ENCODE measurements at regions of chr2 and their contacts with region 1.

Region 1: GRCh38 chr2:96554293-96555145 is 18.0 kb downstream of the ARID5A start:
- DNase-seq: peak; percentile 76
- ATAC-seq: peak; percentile 79
- H3K4me3 Mint-ChIP-seq: no peak overlapping the region
- H3K27ac Mint-ChIP-seq: no peak overlapping the region
- H3K4me1 Mint-ChIP-seq: peaks cover 38% of the 10 kb centered on the region
- H3K27me3 Mint-ChIP-seq: no peaks in the 10 kb centered on the region

Region 2: GRCh38 chr2:96509114-96509846 is 45.2 kb before region 1 on chr2:
- CTCF ChIA-PET with region 1: interaction called, 85 read pairs
- DNase-seq: peak; percentile 69
- ATAC-seq: peak; percentile 35
- H3K4me3 Mint-ChIP-seq: no peak overlapping the region
- H3K27ac Mint-ChIP-seq: no peak overlapping the region
- H3K4me1 Mint-ChIP-seq: peaks cover 27% of the 10 kb centered on the region
- H3K27me3 Mint-ChIP-seq: no peaks in the 10 kb centered on the region

Region 3: DNA sequence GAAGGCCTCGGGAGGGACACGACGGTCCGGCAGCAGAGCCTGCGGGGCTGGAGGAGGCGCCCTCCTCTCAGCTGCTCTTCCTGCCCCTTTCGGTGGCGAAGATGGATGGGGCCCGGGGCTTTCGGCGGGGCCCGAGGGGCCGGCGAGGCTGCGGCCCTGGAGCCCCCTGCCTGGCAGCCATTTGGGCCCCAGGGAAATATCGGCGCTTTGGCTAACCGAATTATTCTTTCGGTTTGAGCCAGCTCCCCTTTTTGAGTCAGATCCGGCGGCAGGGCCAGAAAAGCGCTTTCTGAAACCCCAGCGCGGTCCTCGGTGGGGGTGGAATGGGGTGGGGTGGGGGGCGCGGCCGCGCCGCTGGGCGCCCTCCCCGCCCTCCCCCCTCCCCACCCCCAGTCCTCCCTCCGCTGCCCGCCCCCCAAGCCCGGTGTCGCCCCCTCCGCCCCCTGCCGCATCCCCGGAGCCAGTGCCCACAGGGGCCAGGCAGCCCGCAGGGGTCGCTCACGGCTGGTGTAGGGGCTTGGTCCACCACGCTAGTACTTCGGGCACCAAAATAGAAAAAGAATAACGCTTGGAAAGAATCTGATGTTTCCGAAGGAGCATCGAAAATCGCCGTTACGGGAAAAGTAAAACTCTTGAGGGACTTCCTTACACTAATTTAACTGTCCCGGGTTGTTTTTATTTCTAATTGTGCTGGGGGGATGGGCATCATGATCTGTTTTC is 27.1 kb before region 1 on chr2:
- CTCF ChIA-PET with region 1: interaction called, 24 read pairs
- DNase-seq: peak; percentile 88
- ATAC-seq: peak; percentile 43
- H3K4me3 Mint-ChIP-seq: peak overlapping the region; percentile 65
- H3K27ac Mint-ChIP-seq: peak overlapping the region; percentile 88
- H3K4me1 Mint-ChIP-seq: peaks cover 94% of the 10 kb centered on the region
- H3K27me3 Mint-ChIP-seq: no peaks in the 10 kb centered on the region

Region 4: DNA sequence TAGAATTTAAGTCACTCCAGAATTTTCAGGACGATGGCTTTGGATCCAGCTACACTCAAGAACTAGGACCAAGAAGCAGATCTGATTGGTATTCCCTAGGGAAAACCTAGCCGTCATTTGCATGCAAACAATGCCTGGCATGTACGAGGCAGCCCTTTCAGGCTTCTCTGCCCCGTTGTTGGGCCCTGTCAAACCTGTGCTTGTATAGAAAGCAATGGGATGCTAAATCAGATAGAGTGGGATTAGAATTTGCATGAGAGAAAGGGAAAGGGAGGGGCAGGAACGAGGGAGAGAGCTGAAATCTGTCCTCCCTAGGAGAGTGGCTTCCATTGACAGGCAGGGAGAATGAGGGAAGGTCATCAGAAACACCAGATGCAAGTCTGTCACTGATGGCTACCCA is 10.6 kb after region 1 on chr2:
- CTCF ChIA-PET with region 1: interaction called, 22 read pairs
- DNase-seq: no peak
- ATAC-seq: no peak
- H3K4me3 Mint-ChIP-seq: no peak overlapping the region
- H3K27ac Mint-ChIP-seq: no peak overlapping the region
- H3K4me1 Mint-ChIP-seq: no peaks in the 10 kb centered on the region
- H3K27me3 Mint-ChIP-seq: peaks cover 2% of the 10 kb centered on the region

Region 5: DNA sequence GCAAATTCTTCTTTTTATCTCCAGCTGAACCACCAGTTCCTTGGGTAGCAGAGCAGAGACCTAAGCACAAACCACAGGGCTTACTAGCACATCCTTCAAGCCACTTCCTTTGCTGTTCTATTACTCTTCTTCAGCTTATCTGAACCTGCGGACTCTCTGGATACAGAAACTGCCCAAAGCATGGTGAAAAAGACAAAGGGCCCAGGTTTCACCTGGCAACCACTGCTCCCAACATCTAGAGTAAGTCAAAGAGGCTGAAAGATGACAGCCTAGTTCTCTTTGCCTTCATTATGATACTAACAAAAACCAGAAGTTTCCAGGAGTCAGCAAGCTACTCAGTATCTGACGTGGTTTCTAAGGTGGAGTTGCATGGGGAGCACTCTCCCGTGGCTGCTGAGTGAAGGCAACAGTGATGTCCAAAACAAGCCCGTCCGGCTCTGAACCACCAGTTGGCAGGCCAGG is 40.2 kb after region 1 on chr2:
- CTCF ChIA-PET with region 1: interaction called, 13 read pairs
- DNase-seq: peak; percentile 74
- ATAC-seq: peak; percentile 92
- H3K4me3 Mint-ChIP-seq: peak overlapping the region; percentile 15
- H3K27ac Mint-ChIP-seq: peak overlapping the region; percentile 94
- H3K4me1 Mint-ChIP-seq: peaks cover 63% of the 10 kb centered on the region
- H3K27me3 Mint-ChIP-seq: no peaks in the 10 kb centered on the region

Region 6: GRCh38 chr2:96685577-96686459 is 131.3 kb after region 1 on chr2:
- CTCF ChIA-PET with region 1: no interaction called
- DNase-seq: no peak
- ATAC-seq: no peak
- H3K4me3 Mint-ChIP-seq: no peak overlapping the region
- H3K27ac Mint-ChIP-seq: no peak overlapping the region
- H3K4me1 Mint-ChIP-seq: no peaks in the 10 kb centered on the region
- H3K27me3 Mint-ChIP-seq: no peaks in the 10 kb centered on the region